ENCODE measurements at regions of chr2 and their contacts with region 1.

Region 1: GRCh38 chr2:224492531-224492930 is 90.6 kb upstream of the FAM124B start:
- DNase-seq: no peak
- H3K4me3 ChIP-seq: no peak overlapping the region
- H3K27ac ChIP-seq: no peak overlapping the region
- H3K4me1 ChIP-seq: 0 out of 2 replicates have a peak, but pooled peaks cover 8% of the 10 kb centered on the region
- H3K27me3 ChIP-seq: no peaks in the 10 kb centered on the region
- CTCF ChIP-seq: no peak

Region 2: GRCh38 chr2:224333726-224334482 is 158.6 kb before region 1 on chr2:
- CTCF ChIA-PET with region 1: no interaction called
- POLR2A ChIA-PET with region 1: no interaction called
- intact Hi-C with region 1: no loop called
- DNase-seq: no peak
- H3K4me3 ChIP-seq: no peak overlapping the region
- H3K27ac ChIP-seq: no peak overlapping the region
- H3K4me1 ChIP-seq: 0 out of 2 replicates have a peak, but pooled peaks cover 3% of the 10 kb centered on the region
- H3K27me3 ChIP-seq: no peaks in the 10 kb centered on the region
- CTCF ChIP-seq: no peak

Region 3: GRCh38 chr2:224532931-224533330 is 40.4 kb after region 1 on chr2:
- CTCF ChIA-PET with region 1: interaction called, 12 read pairs
- POLR2A ChIA-PET with region 1: no interaction called
- intact Hi-C with region 1: no loop called
- DNase-seq: no peak
- H3K4me3 ChIP-seq: no peak overlapping the region
- H3K27ac ChIP-seq: no peak overlapping the region; the same call in 1 of the 2 replicates
- H3K4me1 ChIP-seq: no peaks in the 10 kb centered on the region
- H3K27me3 ChIP-seq: no peaks in the 10 kb centered on the region
- CTCF ChIP-seq: no peak

Region 4: DNA sequence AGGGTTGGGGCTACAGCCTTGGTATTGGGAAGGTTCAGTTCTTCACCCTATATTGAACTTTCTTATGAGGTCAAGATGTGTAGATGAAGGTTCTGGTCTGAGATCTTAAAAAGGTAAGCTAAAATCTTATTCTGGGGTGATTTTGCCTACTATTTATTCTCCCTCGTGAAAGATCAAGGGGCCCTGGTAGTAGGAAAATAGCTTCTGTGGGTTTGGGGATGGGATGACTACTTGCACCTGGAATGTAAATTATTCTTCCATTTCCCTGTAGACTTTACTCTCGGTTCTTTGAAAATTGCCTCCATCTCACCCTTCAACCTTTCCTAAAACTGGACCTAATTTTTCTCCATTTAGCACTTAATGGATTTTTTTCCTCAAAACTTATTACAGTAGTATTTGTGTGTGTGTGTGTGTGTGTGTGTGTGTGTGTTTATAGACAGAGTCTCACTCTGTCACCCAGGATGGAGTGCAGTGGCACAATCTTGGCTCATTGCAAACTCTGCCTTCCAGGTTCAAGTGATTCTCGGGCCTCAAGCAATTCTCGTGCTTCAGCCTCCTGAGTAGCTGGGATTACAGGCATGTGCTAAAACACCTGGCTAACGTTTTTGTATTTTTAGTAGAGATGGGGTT is 186.2 kb after region 1 on chr2:
- CTCF ChIA-PET with region 1: no interaction called
- POLR2A ChIA-PET with region 1: interaction called, 41 read pairs
- intact Hi-C with region 1: no loop called
- DNase-seq: peak; percentile 52 to 90
- H3K4me3 ChIP-seq: peak overlapping the region; percentile 33; the same call in 1 of the 2 replicates
- H3K27ac ChIP-seq: peak overlapping the region; percentile 92
- H3K4me1 ChIP-seq: peaks cover 26% of the 10 kb centered on the region
- H3K27me3 ChIP-seq: no peaks in the 10 kb centered on the region
- CTCF ChIP-seq: no peak

Measured in PC-9 (cell line).